ENCODE measurements at regions of chr13 and their contacts with region 1.

Region 1: GRCh38 chr13:44577236-44578066 is 1.3 kb upstream of the TSC22D1 start:
- DNase-seq: peak; percentile 97 to 99
- ATAC-seq: peak; percentile 81 to 90 (median 83)
- H3K4me3 ChIP-seq: peak overlapping the region; percentile 90
- H3K27ac ChIP-seq: peak overlapping the region; percentile 94
- H3K4me1 ChIP-seq: peaks cover 14% of the 10 kb centered on the region
- H3K27me3 ChIP-seq: no peaks in the 10 kb centered on the region
- CTCF ChIP-seq: no peak

Region 2: GRCh38 chr13:44410346-44410859 is 167.0 kb before region 1 on chr13:
- intact Hi-C with region 1: no loop called
- DNase-seq: no peak
- ATAC-seq: no peak
- H3K4me3 ChIP-seq: no peak overlapping the region
- H3K27ac ChIP-seq: no peak overlapping the region
- H3K4me1 ChIP-seq: no peaks in the 10 kb centered on the region
- H3K27me3 ChIP-seq: no peaks in the 10 kb centered on the region
- CTCF ChIP-seq: no peak

Region 3: GRCh38 chr13:44484562-44485138 is 92.8 kb before region 1 on chr13:
- intact Hi-C with region 1: loop called in 1 of 2 experiments (anchors 5 kb)
- DNase-seq: no peak
- ATAC-seq: no peak
- H3K4me3 ChIP-seq: peak overlapping the region; percentile 11
- H3K27ac ChIP-seq: no peak overlapping the region
- H3K4me1 ChIP-seq: peaks cover 33% of the 10 kb centered on the region
- H3K27me3 ChIP-seq: no peaks in the 10 kb centered on the region
- CTCF ChIP-seq: no peak

Region 4: DNA sequence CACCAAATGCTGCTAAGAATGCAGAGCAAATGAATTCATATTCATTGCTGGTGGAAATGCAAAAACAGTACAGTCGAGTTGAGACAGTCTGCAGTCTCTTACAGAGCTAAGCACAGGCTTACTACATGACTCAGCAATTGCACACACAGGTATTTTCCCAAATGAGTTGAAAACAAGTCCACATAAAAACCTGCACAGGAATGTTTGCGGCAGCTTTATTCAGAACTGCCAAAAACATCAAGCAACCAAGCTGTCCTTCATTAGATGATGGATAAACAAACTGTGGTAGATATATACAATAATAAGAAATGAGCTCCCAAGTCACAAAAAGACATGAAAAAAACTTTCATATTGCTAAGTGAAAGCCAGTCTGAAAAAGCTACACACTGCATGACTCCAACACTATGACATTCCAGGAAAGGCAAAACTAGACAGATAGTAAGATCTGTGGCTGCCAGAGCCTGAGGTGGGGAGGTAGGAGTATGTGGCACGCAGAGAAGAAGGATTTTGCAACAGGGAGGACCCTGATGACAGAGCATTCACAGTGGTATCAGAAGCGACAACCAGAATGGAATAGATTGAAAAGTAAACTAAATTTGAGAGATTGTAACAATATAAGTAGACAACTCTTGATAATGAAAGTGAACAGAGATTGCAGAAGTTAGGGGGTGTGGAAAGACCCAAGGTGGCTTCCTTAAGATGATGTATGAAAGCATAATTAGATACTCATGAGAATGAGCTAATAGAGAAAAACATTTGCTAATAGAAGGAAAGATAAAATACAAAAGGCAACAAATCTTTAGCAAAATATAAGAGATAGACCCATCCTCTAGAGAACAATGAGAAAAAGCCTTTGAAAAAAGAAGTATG is 54.1 kb before region 1 on chr13:
- intact Hi-C with region 1: loop called in 1 of 2 experiments (anchors 5 kb)
- DNase-seq: no peak
- ATAC-seq: peak; percentile 56 to 67 (median 58)
- H3K4me3 ChIP-seq: peak overlapping the region; percentile 29
- H3K27ac ChIP-seq: peak overlapping the region; percentile 57
- H3K4me1 ChIP-seq: peaks cover 46% of the 10 kb centered on the region
- H3K27me3 ChIP-seq: no peaks in the 10 kb centered on the region
- CTCF ChIP-seq: no peak

Region 5: DNA sequence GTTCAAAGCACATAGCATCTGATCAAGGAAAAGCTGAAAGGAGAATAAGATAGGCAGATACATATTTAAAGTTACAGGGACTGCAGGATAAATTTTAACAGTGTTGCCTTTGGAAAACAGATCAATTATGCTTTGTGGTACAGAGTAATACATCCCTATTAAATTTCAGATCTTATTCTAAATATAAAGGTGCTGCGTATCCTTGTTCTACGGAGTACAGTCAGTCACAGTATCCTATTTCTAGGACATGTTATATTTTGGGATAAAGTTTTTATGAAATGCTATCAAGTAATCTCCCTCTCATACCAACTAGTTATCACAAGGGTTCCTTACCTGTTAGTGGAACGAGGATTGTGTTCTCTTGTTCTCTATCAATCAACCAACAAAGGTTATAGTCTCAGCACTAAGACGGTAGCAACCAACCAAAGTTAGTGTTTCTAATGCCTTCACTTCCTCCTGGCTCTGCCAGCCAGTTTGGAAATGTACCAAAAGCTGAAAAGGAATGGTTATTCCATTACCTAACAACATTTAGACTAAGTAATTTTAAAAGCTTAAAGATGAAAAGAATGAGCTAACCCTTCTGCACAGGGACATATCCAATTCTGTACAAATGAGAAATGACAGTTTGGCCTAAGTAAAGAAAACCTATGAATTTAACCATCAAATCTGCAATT is 36.6 kb before region 1 on chr13:
- intact Hi-C with region 1: no loop called
- DNase-seq: no peak
- ATAC-seq: peak; percentile 30 to 82 (median 66)
- H3K4me3 ChIP-seq: peak overlapping the region; percentile 17
- H3K27ac ChIP-seq: peak overlapping the region; percentile 58
- H3K4me1 ChIP-seq: peaks cover 36% of the 10 kb centered on the region
- H3K27me3 ChIP-seq: no peaks in the 10 kb centered on the region
- CTCF ChIP-seq: no peak

Region 6: DNA sequence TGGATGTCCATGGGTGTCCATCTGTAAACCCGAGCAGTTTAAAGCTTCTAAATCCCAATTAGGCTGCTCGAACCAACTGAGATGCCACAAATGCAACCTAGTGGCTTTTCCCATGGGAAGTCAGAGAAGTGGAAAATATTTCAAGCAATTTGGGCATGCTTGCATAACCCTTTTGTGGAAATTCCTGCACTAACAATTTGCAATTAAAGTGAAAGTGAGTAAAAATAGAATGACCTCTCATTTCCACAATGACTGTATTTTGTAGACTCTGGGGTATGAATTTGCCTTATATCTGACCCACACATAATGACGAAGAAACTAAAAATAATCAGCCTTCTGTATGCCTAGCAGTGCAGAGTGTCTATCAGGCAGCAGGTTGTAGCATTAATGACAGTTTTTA is 90.5 kb after region 1 on chr13:
- intact Hi-C with region 1: no loop called
- DNase-seq: no peak
- ATAC-seq: peak in 3 of 4 donors; percentile 57 to 83 (median 71)
- H3K4me3 ChIP-seq: no peak overlapping the region
- H3K27ac ChIP-seq: no peak overlapping the region
- H3K4me1 ChIP-seq: peaks cover 16% of the 10 kb centered on the region
- H3K27me3 ChIP-seq: no peaks in the 10 kb centered on the region
- CTCF ChIP-seq: no peak

Region 7: GRCh38 chr13:44752164-44752563 is 174.7 kb after region 1 on chr13:
- intact Hi-C with region 1: loop called in 1 of 2 experiments (anchors 5 kb)
- DNase-seq: no peak
- ATAC-seq: peak; percentile 90 to 95 (median 92)
- H3K4me3 ChIP-seq: no peak overlapping the region
- H3K27ac ChIP-seq: peak overlapping the region; percentile 66
- H3K4me1 ChIP-seq: peaks cover 24% of the 10 kb centered on the region
- H3K27me3 ChIP-seq: no peaks in the 10 kb centered on the region
- CTCF ChIP-seq: no peak

Region 8: GRCh38 chr13:44870456-44870929 is 293.0 kb after region 1 on chr13:
- intact Hi-C with region 1: loop called in 1 of 2 experiments (anchors 5 kb)
- DNase-seq: peak; percentile 79 to 95
- ATAC-seq: peak; percentile 91 to 97 (median 95)
- H3K4me3 ChIP-seq: no peak overlapping the region
- H3K27ac ChIP-seq: peak overlapping the region; percentile 84
- H3K4me1 ChIP-seq: peaks cover 23% of the 10 kb centered on the region
- H3K27me3 ChIP-seq: no peaks in the 10 kb centered on the region
- CTCF ChIP-seq: no peak

Region 9: DNA sequence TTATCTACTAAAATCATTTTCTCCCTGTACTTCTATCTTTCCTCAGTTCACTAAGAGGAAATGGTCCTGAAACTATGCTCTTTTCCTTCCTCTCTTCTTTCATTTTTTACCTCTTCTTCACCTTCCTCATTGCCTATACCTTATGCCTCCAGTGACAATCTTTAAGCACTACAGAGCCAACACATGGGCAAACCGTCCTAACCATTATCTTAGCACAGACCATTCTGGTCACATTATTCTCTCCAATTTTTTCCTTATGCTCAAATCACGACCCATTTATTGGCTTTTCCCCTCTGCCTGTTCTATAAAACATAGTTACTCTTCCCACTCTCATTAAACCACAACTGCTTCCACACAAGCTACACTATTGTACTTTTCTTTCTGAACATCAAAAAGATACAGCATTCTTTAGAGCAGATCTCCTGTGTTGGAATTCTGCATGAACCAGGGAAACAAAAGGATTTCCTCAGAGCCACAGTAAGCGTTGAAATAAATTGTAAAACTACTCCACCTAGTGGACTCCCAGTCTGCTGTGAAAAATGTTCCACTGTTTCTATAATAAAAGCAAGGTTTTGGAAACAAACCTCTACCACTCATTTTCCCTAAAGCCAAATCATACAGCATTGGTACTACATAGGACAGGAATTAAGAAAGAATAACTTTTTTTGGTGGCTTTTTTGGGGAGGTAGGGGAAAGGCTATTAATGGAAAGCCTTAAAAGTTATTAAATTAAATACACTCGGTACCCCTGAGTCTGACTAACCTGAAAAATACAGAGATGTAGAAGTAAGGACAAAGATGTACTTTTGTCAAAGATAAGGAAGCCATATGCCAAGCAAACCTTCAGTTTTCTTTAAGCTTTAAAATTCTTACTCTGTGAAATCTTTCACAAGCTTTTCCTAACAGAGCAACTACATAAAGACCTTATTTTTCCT is 392.4 kb after region 1 on chr13:
- intact Hi-C with region 1: loop called in 1 of 2 experiments (anchors 2 kb)
- DNase-seq: no peak
- ATAC-seq: peak; percentile 51 to 66 (median 57)
- H3K4me3 ChIP-seq: no peak overlapping the region
- H3K27ac ChIP-seq: peak overlapping the region; percentile 51
- H3K4me1 ChIP-seq: peaks cover 47% of the 10 kb centered on the region
- H3K27me3 ChIP-seq: no peaks in the 10 kb centered on the region
- CTCF ChIP-seq: peak; percentile 86